Heart right ventricle (tissue), 16 donors: ENCODE measurements at regions of chr3 and their contacts with region 1.

Region 1: DNA sequence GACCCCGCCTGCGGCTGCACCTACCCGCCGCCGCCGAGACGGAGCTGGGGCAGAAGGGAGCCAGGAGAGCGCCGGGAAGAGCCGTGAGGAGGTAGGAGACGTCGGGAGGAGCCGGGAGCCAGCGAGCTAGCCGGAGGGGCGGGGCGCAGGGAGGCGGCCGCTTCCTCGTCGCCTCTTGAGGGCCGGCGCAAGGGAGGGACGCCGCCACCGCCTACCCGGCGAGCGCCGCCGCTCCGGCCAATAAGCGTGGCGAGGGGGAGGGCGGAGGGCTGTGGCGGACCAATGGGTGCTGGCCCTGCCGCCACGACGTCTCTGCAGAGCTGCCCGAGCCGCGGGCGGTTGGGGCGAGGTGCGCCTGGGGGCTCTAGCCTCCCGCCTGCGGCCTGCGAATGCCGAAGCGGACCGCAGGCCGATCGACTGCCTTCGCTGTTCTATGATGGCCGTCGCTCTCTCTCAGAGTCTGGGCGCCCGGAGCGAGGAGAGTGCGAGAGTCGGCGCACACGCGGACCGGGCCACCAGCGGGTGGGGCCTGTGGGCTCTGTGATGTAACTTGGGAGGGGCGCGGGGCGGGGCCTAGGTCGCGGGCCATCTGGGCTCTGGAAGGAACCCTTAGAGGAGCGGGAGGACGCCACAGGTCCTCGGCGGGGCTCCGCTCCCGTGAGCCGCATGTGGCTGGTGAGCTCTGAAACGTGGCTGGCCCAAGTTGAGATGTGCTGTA is 72.7 kb upstream of the MAP4 start:
- DNase-seq: peak; percentile 96 to 97
- ATAC-seq: peak; percentile 94 to 98 (median 96)
- H3K4me3 ChIP-seq: peak overlapping the region; percentile 66 to 99 (median 90)
- H3K27ac ChIP-seq: peak overlapping the region; percentile 96 to 99 (median 98)
- H3K4me1 ChIP-seq: peaks cover 10 to 46% (median 43%) of the 10 kb centered on the region in 9 donors
- H3K27me3 ChIP-seq: no peaks in the 10 kb centered on the region
- CTCF ChIP-seq: no peak

Region 2: GRCh38 chr3:47899495-47900125 is 189.3 kb before region 1 on chr3:
- intact Hi-C with region 1: no loop called
- DNase-seq: no peak
- ATAC-seq: peak in 3 of 8 donors; percentile 47 to 63 (median 49)
- H3K4me3 ChIP-seq: no peak overlapping the region
- H3K27ac ChIP-seq: peak overlapping the region in 1 of 10 donors; percentile 9
- H3K4me1 ChIP-seq: peaks cover 0 to 30% (median 8%) of the 10 kb centered on the region in 9 donors
- H3K27me3 ChIP-seq: no peaks in the 10 kb centered on the region
- CTCF ChIP-seq: no peak

Region 3: DNA sequence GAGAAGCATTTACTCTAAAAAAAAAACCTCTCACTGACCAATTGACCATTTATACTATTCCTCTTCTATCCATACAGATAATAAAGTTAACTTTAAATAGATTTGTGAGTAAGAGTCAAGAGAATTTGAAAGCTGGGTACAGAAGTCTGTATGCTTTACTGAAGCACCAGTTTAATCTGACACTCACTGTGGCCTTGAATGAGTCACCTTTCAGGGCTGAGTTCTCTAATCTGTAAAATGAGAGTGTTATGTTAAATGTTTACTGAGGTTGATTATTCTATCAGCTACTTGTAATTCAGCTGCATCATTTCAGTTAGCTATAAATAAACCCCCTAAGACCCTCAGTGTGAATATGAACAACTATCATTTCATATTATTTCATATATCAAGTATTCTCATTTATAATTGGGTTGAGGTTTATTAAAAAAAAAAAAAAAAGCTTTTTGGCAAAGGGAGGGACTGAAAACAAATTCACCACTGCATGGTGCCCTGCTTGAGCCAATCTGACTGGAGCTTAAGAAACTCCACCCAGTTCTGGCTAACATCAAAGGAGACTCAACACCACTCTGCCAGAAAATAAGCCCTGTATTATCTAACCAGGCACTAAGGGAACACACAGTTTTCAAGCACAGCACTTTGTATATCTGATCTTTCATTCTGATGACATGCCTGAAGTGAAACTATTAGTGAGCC is 75.5 kb before region 1 on chr3:
- intact Hi-C with region 1: loop called in 7 of 10 experiments (anchors 2 to 10 kb)
- DNase-seq: peak in 1 of 2 donors; percentile 48
- ATAC-seq: peak; percentile 81 to 93 (median 90)
- H3K4me3 ChIP-seq: peak overlapping the region in 5 of 10 donors; percentile 38 to 44 (median 40)
- H3K27ac ChIP-seq: peak overlapping the region; percentile 18 to 85 (median 70)
- H3K4me1 ChIP-seq: peaks cover 13 to 94% (median 67%) of the 10 kb centered on the region in 9 donors
- H3K27me3 ChIP-seq: no peaks in the 10 kb centered on the region
- CTCF ChIP-seq: no peak

Region 4: DNA sequence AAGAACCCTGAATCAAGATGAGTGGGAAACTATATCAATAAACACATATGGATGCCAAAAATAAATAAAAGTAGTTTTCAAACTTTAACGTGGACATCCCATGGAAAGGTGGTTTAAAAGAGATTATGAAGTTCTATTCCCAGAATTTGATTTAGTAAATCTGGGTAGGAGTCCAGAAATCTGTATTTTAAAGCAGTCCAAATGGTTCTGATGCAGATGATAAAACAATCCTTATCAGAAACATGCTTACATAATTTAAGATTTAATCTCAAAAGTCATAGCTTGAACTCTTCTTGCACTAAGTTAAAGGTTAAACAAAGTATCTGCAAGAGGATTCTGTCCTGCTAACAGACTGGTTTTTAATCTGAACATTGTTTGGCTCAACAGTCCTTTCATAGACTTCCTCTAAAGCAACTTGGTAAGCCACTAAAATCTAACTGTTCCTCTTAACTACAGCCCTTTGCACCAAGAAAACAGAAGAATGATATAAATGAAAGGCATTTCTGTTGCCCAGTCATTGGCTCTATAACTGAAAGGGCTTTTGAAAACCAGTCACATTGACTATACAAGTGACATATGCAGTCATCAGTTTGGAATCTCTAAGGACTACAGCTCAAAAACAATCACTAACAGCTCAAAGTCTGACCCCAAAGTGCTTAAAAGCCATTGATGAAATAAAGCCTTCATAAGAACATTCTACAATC is 49.3 kb before region 1 on chr3:
- intact Hi-C with region 1: loop called in 2 of 10 experiments (anchors 5 to 10 kb)
- DNase-seq: no peak
- ATAC-seq: peak in 6 of 8 donors; percentile 50 to 68 (median 58)
- H3K4me3 ChIP-seq: no peak overlapping the region
- H3K27ac ChIP-seq: peak overlapping the region; percentile 38 to 86 (median 70)
- H3K4me1 ChIP-seq: peaks cover 21 to 78% (median 61%) of the 10 kb centered on the region in 9 donors
- H3K27me3 ChIP-seq: no peaks in the 10 kb centered on the region
- CTCF ChIP-seq: no peak

Region 5: GRCh38 chr3:48130321-48130904 is 41.5 kb after region 1 on chr3:
- intact Hi-C with region 1: loop called in 4 of 10 experiments (anchors 5 kb)
- DNase-seq: peak; percentile 81 to 89
- ATAC-seq: peak; percentile 94 to 98 (median 96)
- H3K4me3 ChIP-seq: peak overlapping the region in 2 of 10 donors; percentile 5 to 7
- H3K27ac ChIP-seq: peak overlapping the region; percentile 73 to 95 (median 86)
- H3K4me1 ChIP-seq: peaks cover 13 to 33% (median 19%) of the 10 kb centered on the region in 9 donors
- H3K27me3 ChIP-seq: no peaks in the 10 kb centered on the region
- CTCF ChIP-seq: no peak

Region 6: GRCh38 chr3:48142316-48142870 is 53.5 kb after region 1 on chr3:
- intact Hi-C with region 1: loop called in 2 of 10 experiments (anchors 10 kb)
- DNase-seq: no peak
- ATAC-seq: no peak
- H3K4me3 ChIP-seq: no peak overlapping the region
- H3K27ac ChIP-seq: peak overlapping the region in 1 of 10 donors; percentile 39
- H3K4me1 ChIP-seq: peaks cover 0 to 36% (median 18%) of the 10 kb centered on the region in 9 donors
- H3K27me3 ChIP-seq: no peaks in the 10 kb centered on the region
- CTCF ChIP-seq: no peak

Region 7: DNA sequence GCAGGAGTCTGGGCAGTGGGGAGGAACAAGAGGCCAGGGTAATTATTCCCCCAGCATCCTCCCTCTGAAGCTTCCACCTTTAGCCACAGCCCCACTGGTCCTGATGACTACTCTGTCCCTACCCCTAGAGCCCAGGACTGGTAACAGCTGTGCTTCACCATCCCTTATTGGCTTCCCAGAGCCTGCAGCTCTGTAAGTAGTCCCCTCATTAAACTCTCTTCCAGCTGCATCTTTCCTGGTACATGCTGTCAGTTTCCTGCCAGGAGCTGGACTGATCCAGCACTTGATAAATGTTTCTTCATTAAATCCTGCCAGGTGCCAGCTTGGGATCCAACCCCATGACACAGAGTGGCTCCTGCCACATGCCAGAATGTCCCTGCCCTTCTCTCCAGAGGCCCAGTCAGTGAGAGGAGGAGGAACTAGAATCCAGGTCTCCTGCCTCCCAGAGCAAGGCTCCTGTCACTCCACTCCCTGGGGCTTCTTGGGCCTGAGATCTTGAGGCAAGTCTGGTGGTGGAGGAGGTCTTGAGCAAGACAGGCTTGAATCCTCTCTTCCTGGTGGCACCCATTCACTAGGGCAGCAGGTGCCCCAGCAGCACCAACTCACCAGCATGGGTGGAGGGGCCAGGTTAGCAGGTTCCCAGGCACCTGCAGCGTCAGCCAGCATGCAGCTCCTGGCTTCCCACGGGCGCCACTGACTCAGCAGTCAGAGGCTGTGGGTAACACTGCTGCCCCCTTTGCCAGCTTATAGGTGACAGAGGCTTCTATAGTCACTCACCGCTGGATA is 310.7 kb after region 1 on chr3:
- intact Hi-C with region 1: no loop called
- DNase-seq: no peak
- ATAC-seq: no peak
- H3K4me3 ChIP-seq: no peak overlapping the region
- H3K27ac ChIP-seq: no peak overlapping the region
- H3K4me1 ChIP-seq: peaks cover 0 to 11% (median 0%) of the 10 kb centered on the region in 9 donors
- H3K27me3 ChIP-seq: peaks cover 0 to 17% (median 0%) of the 10 kb centered on the region in 7 donors
- CTCF ChIP-seq: no peak